GM10248 (cell line): ENCODE measurements at regions of chr2 and their contacts with region 1.

Region 1: GRCh38 chr2:61658841-61659780 is 121.0 kb upstream of the XPO1 start:
- DNase-seq: peak; percentile 66
- CTCF ChIP-seq: peak; percentile 56

Region 2: DNA sequence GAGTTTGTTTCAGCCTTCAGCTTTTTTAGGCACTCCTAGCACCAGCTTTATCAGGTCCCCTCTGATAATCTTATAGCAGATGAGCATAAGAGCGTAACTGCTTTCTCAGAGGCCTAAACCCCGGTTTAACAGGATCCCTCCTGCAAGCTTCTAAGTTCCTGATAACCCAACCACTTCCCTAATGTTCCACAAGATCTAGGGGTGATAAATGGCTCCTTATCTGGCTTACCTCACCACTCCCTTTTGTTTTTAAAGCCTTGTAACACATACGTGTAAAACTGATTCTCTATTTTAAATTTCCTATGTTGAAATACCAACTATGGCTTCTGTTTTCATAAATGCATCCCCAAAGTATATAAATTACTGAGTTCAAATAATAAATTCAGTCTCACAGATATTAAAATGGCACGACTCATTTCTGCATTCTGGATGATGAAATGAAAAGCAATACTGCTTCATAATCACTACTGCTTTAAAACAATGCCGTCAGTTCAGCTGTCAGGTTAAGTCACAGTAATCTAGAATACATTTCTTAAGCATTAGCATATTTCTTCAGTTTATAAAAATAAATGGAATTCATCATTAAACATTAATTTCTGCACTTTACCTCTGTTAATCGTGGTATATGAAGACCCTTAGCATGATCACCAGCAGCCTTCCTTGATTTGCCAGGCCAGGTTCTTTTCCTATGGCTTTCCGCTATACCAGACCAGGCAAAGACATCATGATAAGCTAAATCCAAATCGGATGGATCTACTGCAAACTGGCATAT is 370.9 kb before region 1 on chr2:
- CTCF ChIA-PET with region 1: no interaction called
- POLR2A ChIA-PET with region 1: no interaction called
- DNase-seq: no peak
- CTCF ChIP-seq: no peak

Region 3: GRCh38 chr2:61426267-61426897 is 232.7 kb before region 1 on chr2:
- CTCF ChIA-PET with region 1: interaction called, 13 read pairs
- POLR2A ChIA-PET with region 1: no interaction called
- DNase-seq: peak; percentile 74
- CTCF ChIP-seq: peak; percentile 94

Region 4: DNA sequence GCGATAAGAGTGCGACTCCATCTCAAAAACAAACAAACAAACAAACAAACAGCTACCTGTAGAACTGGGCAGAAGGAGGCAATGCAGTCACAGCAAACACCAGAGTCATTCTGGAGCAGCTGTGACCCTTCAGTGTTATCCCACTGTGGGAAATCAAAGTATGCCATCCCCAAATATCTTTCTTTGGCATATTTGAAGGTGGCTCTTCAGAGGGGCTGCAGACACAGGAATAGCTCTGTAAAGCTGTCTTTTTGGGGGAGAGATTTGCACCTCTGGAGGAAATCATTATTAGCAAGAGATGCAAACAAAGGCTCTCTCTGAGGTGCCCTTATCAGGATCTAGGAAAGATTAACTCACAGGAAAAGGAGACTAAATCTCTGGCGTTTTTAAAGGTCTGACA is 22.4 kb before region 1 on chr2:
- CTCF ChIA-PET with region 1: interaction called, 10 read pairs
- POLR2A ChIA-PET with region 1: no interaction called
- DNase-seq: no peak
- CTCF ChIP-seq: no peak

Region 5: DNA sequence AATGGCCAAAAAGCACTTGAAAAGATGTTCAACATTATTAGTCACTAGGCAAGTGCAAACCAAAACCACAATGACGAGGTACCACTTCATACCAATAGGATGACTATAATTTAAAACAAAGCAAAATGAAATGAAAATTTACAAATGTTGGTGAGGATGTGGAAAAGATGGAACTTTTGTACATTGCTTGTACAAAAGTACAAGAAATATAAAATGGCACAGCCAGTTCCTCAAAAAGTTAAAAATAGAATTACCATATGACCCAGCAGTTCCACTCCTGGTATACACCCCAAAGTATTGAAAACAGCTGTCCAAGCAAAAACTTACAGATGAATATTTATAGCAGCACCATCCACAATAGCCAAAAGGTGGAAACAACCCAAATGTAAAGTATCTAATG is 13.2 kb before region 1 on chr2:
- CTCF ChIA-PET with region 1: interaction called, 16 read pairs
- POLR2A ChIA-PET with region 1: no interaction called
- DNase-seq: no peak
- CTCF ChIP-seq: no peak

Region 6: DNA sequence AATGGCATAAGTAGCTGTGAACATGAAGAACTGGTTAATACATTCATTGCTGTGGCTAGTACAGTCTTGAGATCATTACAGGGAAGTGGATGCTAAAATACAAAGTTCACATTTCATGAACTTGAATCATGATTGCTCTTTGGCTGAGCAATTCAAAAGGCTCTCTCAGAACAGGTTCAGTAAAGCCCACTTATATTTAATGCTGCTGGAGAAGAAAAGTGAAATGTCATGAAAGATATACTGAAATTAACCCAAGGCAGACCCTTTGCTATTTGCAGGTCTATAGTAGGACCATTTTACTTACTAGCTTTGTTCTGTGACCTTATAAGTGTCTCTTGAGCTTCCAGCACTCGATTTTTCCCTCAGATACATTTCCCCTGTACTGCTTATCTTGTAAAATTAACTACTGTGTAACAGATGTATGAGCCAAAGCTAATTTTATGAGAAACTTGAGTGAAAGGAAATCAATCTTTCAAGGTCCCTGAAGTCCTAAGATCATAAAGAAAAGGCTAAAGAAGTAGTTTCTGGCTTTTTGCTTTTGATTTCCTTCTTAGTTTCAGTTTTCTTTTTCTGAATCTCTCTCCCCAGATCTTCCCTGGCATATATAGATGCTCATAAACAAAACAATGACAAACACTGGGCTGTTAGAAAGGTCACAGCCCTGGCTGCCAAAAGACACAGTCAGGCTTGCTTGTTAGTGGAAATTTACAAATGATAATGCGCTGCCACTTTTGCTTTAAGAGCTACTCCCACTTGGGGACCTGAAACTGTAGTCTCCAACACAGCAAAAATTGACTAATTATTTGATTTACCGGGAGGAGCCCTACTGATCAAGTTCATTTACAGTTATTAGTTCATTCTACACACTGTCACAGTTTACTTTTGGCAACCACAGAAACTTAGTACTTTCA is 11.7 kb after region 1 on chr2:
- CTCF ChIA-PET with region 1: interaction called, 42 read pairs
- POLR2A ChIA-PET with region 1: no interaction called
- DNase-seq: peak; percentile 41
- CTCF ChIP-seq: no peak